ENCODE measurements at regions of chr4 and their contacts with region 1.

Region 1: GRCh38 chr4:10164877-10165283 is 48.3 kb upstream of the WDR1 start:
- DNase-seq: peak in 1 of 14 experiments; percentile 19
- ATAC-seq: no peak
- H3K4me3 ChIP-seq: no peak overlapping the region
- H3K4me3 Mint-ChIP-seq: no peak overlapping the region
- H3K27ac ChIP-seq: no peak overlapping the region
- H3K27ac Mint-ChIP-seq: no peak overlapping the region
- H3K4me1 ChIP-seq: peaks cover 32% of the 10 kb centered on the region
- H3K4me1 Mint-ChIP-seq: peaks cover 21% of the 10 kb centered on the region
- H3K27me3 ChIP-seq: no peaks in the 10 kb centered on the region
- H3K27me3 Mint-ChIP-seq: no peaks in the 10 kb centered on the region
- CTCF ChIP-seq: peak; percentile 61

Region 2: GRCh38 chr4:10135260-10135659 is 29.6 kb before region 1 on chr4:
- CTCF ChIA-PET with region 1: no interaction called
- POLR2A ChIA-PET with region 1: no interaction called
- intact Hi-C with region 1: no loop called
- DNase-seq: no peak
- ATAC-seq: no peak
- H3K4me3 ChIP-seq: no peak overlapping the region
- H3K4me3 Mint-ChIP-seq: no peak overlapping the region
- H3K27ac ChIP-seq: no peak overlapping the region
- H3K27ac Mint-ChIP-seq: no peak overlapping the region
- H3K4me1 ChIP-seq: no peaks in the 10 kb centered on the region
- H3K4me1 Mint-ChIP-seq: no peaks in the 10 kb centered on the region
- H3K27me3 ChIP-seq: no peaks in the 10 kb centered on the region
- H3K27me3 Mint-ChIP-seq: no peaks in the 10 kb centered on the region
- CTCF ChIP-seq: no peak

Region 3: GRCh38 chr4:10384974-10385373 is 220.1 kb after region 1 on chr4:
- CTCF ChIA-PET with region 1: no interaction called
- POLR2A ChIA-PET with region 1: no interaction called
- intact Hi-C with region 1: loop called in 1 of 2 experiments (anchors 5 kb)
- DNase-seq: no peak
- ATAC-seq: no peak
- H3K4me3 ChIP-seq: no peak overlapping the region
- H3K4me3 Mint-ChIP-seq: no peak overlapping the region
- H3K27ac ChIP-seq: no peak overlapping the region
- H3K27ac Mint-ChIP-seq: no peak overlapping the region
- H3K4me1 ChIP-seq: no peaks in the 10 kb centered on the region
- H3K4me1 Mint-ChIP-seq: no peaks in the 10 kb centered on the region
- H3K27me3 ChIP-seq: no peaks in the 10 kb centered on the region
- H3K27me3 Mint-ChIP-seq: peaks cover 4% of the 10 kb centered on the region
- CTCF ChIP-seq: no peak

Measured in CD4-positive, alpha-beta T cell (primary cell).